ENCODE measurements at regions of chr6 and their contacts with region 1.

Region 1: GRCh38 chr6:3456755-3457466 is at the start of gene SLC22A23:
- DNase-seq: peak; percentile 60
- H3K4me3 ChIP-seq: peak within 1 kb of the TSS; percentile 82 to 93 (median 88)
- H3K27ac ChIP-seq: peak within 1 kb of the TSS; percentile 29
- H3K4me1 ChIP-seq: peaks cover 26% of the 10 kb centered on the region
- H3K27me3 ChIP-seq: no peaks in the 10 kb centered on the region
- CTCF ChIP-seq: peak; percentile 37 to 65
- total RNA-seq, gene SLC22A23: 34.0 to 49.3 TPM

Region 2: GRCh38 chr6:3383525-3383924 is 73.4 kb before region 1 on chr6:
- CTCF ChIA-PET with region 1: no interaction called
- dilution Hi-C with region 1: loop called (anchors 5 kb)
- in situ Hi-C with region 1: no loop called
- intact Hi-C with region 1: no loop called
- DNase-seq: peak; percentile 46
- H3K4me3 ChIP-seq: no peak overlapping the region
- H3K27ac ChIP-seq: no peak overlapping the region
- H3K4me1 ChIP-seq: peaks cover 45% of the 10 kb centered on the region
- H3K27me3 ChIP-seq: no peaks in the 10 kb centered on the region
- CTCF ChIP-seq: no peak

Region 3: GRCh38 chr6:3433005-3433404 is 23.9 kb before region 1 on chr6:
- CTCF ChIA-PET with region 1: no interaction called
- dilution Hi-C with region 1: no loop called
- in situ Hi-C with region 1: no loop called
- intact Hi-C with region 1: loop called (anchors 2 kb)
- DNase-seq: no peak
- H3K4me3 ChIP-seq: peak overlapping the region in 1 of 3 experiments; percentile 12
- H3K27ac ChIP-seq: peak overlapping the region; percentile 64
- H3K4me1 ChIP-seq: peaks cover 41% of the 10 kb centered on the region
- H3K27me3 ChIP-seq: no peaks in the 10 kb centered on the region
- CTCF ChIP-seq: no peak

Region 4: DNA sequence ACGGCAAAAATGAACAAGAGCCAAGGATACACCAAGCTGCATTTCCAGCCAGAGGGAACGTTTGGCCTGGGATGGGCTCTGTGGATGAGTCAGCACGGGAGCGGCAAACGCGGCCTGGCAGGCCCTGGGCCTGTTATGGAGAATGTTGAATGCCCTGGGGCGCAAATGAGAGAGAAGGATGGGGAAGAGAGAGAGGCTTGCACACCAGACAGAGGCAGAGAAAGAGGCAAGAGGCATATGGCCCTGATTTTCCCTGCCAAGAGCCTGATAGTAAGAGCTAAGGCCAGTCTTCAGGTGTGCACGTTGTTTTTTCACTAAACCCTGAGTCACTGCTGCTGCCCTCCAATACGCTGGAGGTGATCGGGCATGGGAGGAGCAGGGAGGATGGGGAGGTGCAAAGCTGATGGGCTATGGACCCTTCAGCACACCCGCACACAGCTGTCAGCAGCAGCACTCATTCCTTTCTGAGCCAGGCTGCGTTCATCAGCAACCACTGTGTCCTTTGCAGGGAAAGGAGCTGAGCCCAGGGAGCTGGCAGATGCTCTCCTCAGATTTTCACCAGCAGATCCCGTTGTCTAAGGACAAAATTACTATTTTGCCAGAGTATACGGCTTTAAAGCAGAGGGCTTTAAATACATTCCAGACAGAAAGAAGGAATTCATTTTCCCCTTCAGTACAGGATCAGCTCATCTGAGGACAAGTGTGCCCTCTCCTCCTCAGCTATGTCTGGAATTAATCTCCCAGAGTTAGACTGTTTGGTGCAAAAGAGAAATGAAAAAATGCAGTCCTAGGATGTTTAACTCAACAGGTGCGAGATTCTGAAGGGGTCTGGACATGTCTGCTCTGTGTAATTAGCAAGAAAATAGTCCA is 61.7 kb after region 1 on chr6:
- CTCF ChIA-PET with region 1: no interaction called
- dilution Hi-C with region 1: no loop called
- in situ Hi-C with region 1: no loop called
- intact Hi-C with region 1: loop called (anchors 2 kb)
- DNase-seq: peak; percentile 94
- H3K4me3 ChIP-seq: no peak overlapping the region
- H3K27ac ChIP-seq: peak overlapping the region; percentile 79
- H3K4me1 ChIP-seq: peaks cover 39% of the 10 kb centered on the region
- H3K27me3 ChIP-seq: no peaks in the 10 kb centered on the region
- CTCF ChIP-seq: no peak

Region 5: GRCh38 chr6:3592371-3592941 is 135.5 kb after region 1 on chr6:
- CTCF ChIA-PET with region 1: no interaction called
- dilution Hi-C with region 1: no loop called
- in situ Hi-C with region 1: no loop called
- intact Hi-C with region 1: loop called (anchors 1 kb)
- DNase-seq: peak; percentile 100
- H3K4me3 ChIP-seq: no peak overlapping the region
- H3K27ac ChIP-seq: peak overlapping the region; percentile 88
- H3K4me1 ChIP-seq: peaks cover 18% of the 10 kb centered on the region
- H3K27me3 ChIP-seq: no peaks in the 10 kb centered on the region
- CTCF ChIP-seq: no peak

Region 6: DNA sequence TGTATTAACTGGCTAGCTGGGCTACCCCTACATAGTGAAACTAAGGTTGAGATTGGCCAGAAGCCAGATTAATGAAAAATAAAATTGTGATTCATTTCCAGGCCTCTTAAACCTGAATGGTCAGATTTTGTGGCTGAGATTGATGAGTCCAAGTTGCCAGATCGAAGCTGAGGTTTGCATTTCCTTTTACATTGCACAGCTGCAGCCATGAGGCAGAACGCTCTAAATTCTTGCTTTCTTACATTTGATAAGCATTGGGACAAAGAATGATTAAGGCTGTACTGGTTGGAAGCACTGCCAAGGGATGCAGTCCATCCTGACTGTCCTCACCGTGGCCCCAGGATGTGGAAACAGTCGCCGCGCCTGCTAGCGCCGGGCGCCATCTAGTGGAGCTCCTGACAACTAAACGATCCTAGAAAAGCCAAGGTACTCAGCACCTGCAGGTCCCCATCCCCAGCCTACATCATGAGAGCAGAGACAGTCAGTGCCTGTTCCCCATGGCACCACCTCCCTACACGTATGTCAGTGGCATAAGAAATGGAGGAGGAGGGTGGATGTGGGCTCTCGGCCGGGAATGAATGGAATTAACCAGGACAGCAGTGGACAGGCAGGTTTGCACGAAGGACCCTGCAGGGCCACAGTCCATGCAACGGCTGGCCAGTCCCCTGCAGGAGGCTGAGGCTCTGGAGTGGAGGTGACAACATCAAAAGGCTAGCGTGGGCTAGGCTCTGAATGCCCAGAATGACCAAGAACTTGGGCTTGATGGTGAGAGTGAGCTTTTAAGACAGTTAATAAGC is 275.6 kb after region 1 on chr6:
- CTCF ChIA-PET with region 1: interaction called, 6 read pairs
- dilution Hi-C with region 1: no loop called
- in situ Hi-C with region 1: loop called in 1 of 2 experiments (anchors 5 kb)
- intact Hi-C with region 1: loop called (anchors 1 kb)
- DNase-seq: peak; percentile 70
- H3K4me3 ChIP-seq: no peak overlapping the region
- H3K27ac ChIP-seq: no peak overlapping the region
- H3K4me1 ChIP-seq: peaks cover 12% of the 10 kb centered on the region
- H3K27me3 ChIP-seq: no peaks in the 10 kb centered on the region
- CTCF ChIP-seq: peak; percentile 68 to 98

Region 7: DNA sequence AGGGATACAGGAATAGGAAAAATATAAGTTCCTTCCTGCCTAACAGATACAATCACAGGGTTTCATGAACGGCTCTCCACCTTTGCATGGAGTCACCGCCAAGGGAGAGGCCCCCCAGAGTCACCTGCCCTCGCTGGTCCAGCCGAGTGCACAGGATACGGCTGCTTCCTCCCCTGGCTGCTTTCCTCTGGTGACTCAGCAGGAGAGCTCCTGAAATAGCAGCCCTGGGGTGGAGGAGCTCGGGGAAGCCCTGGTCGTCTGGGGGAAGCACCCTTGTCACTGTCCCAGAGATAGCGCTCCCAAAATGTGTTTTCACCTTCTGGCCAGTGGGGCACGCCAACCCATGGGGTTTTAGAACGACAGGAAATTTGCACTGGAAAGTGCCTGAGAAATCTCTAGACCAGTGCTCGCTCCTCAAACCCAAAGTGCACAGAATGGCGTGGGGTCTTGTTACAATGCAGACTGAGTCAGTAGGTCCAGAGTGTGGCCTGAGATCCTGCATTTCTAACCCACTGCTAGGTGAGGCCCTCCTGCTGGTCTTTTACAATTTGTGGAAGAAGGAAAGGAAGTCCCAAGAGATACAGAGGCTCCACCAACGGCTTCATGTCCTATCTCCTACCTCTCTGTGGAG is 356.4 kb after region 1 on chr6:
- CTCF ChIA-PET with region 1: no interaction called
- dilution Hi-C with region 1: no loop called
- in situ Hi-C with region 1: no loop called
- intact Hi-C with region 1: no loop called
- DNase-seq: peak; percentile 65
- H3K4me3 ChIP-seq: no peak overlapping the region
- H3K27ac ChIP-seq: no peak overlapping the region
- H3K4me1 ChIP-seq: peaks cover 37% of the 10 kb centered on the region
- H3K27me3 ChIP-seq: no peaks in the 10 kb centered on the region
- CTCF ChIP-seq: no peak

Measured in mammary epithelial cell (primary cell).